MCF 10A (cell line): ENCODE measurements at regions of chr14 and their contacts with region 1.

Region 1: DNA sequence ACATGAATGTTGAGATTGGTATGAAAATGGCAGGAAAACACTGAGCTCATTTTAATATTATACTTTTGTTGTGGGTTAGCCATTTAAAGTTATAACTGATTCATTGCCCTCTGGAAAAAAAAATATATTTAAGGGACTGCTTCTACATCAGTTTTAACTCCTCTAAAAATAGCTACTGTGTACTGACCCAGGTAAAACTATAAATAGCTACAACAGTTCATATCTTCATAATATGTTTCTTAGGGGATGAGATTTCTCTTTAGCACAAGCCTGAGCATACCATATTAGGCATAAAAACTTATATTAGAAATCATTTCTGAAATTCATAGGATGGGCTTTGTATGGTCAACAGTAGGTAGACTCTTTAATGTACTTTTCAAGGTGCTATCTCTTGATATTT is 81.0 kb downstream of the KTN1 start:
- DNase-seq: no peak
- H3K4me3 Mint-ChIP-seq: no peak overlapping the region
- H3K27ac Mint-ChIP-seq: no peak overlapping the region
- H3K4me1 Mint-ChIP-seq: no peaks in the 10 kb centered on the region
- H3K27me3 Mint-ChIP-seq: no peaks in the 10 kb centered on the region
- CTCF ChIP-seq: no peak

Region 2: GRCh38 chr14:54935958-54936357 is 725.1 kb before region 1 on chr14:
- CTCF ChIA-PET with region 1: no interaction called
- POLR2A ChIA-PET with region 1: no interaction called
- intact Hi-C with region 1: no loop called
- DNase-seq: peak; percentile 77
- H3K4me3 Mint-ChIP-seq: no peak overlapping the region
- H3K27ac Mint-ChIP-seq: no peak overlapping the region
- H3K4me1 Mint-ChIP-seq: peaks cover 9% of the 10 kb centered on the region
- H3K27me3 Mint-ChIP-seq: no peaks in the 10 kb centered on the region
- CTCF ChIP-seq: no peak

Region 3: DNA sequence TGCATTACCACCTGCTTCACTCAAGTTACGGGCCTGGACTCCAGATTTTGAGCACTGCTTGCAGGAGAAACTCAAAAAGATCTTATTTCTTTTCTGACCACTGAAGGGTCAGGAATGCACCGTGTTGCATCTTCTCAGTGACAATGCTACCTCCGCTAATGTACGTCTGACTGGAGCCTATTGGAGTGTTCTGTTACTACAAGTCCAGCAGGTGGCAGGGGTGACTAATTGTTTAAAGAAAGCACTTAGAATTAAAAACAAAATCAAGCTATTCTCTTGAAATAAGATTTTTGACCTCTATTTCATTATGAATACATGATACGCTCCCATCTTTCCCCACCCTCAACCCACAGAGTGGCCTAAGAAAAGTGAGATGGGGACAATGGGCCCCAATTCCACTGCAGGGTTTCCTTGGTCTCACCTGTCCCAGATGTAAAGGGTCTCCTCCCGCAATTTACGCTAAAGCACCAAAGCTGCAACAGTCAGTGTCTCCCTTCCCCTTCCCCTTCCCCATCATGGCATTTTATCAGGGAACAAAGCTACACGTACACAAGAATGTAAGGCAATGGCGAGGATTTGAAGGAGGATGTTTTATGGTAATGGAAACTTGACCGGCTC is 222.9 kb before region 1 on chr14:
- CTCF ChIA-PET with region 1: interaction called, 11 read pairs
- POLR2A ChIA-PET with region 1: no interaction called
- intact Hi-C with region 1: no loop called
- DNase-seq: peak; percentile 68
- H3K4me3 Mint-ChIP-seq: no peak overlapping the region
- H3K27ac Mint-ChIP-seq: no peak overlapping the region
- H3K4me1 Mint-ChIP-seq: no peaks in the 10 kb centered on the region
- H3K27me3 Mint-ChIP-seq: peaks cover 16% of the 10 kb centered on the region
- CTCF ChIP-seq: peak; percentile 63